HepG2 (cell line): ENCODE measurements at regions of chr1 and their contacts with region 1.

Region 1: GRCh38 chr1:85571830-85572229 is 8.7 kb upstream of the CCN1 start:
- DNase-seq: no peak
- ATAC-seq: no peak
- H3K4me3 ChIP-seq: no peak overlapping the region
- H3K27ac ChIP-seq: no peak overlapping the region
- H3K4me1 ChIP-seq: peaks cover 39% of the 10 kb centered on the region
- H3K27me3 ChIP-seq: no peaks in the 10 kb centered on the region
- CTCF ChIP-seq: no peak
- EP300 ChIP-seq: no peak
- POLR2A ChIP-seq: no peak
- RAD21 ChIP-seq: no peak

Region 2: DNA sequence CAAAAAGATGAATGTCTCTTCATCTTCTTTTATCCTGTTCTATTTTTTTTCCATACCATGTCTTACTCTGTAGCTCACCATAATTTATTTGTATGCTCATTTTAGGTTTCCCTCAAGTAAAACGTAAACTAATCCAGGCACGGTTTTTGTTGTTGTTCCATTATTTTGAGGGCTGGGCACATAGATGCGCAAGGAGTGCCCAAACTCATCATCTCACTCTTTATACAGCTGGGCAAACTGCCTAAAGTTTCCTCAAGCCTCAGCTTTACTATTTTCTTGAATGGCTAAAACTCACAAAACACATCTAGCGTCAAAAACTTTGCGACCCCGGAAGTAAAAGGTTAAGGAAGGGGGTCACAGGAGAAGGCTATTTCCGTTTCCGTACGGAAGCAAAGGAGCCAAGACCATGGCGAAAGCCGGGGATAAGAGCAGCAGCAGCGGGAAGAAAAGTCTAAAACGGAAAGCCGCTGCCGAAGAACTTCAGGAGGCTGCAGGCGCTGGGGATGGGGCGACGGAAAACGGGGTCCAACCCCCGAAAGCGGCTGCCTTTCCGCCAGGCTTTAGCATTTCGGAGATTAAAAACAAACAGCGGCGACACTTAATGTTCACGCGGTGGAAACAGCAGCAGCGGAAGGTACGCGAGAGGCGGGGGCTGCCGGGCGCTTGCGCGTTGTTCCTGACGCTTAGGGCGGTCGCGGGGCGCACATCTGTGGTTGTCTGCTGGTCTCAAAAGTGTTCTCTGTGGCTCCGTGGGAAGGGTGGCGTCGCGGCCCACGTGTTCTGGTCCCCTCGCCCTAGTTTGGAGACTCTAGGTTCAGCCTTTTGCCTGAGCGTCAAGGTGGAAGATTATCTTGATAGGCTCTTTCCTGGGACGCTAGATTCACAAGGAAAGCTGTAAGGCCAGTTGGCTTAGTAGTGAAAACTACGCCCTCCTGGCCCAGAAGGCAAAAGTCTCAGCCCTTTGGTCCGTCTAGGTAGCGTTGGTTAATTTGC is 1092.7 kb before region 1 on chr1 and contains the start of gene RPF1:
- CTCF ChIA-PET with region 1: no interaction called
- POLR2A ChIA-PET with region 1: no interaction called
- in situ Hi-C with region 1: no loop called
- intact Hi-C with region 1: loop called (anchors 5 kb)
- DNase-seq: peak; percentile 82
- ATAC-seq: peak; percentile 99
- H3K4me3 ChIP-seq: peak within 1 kb of the TSS; percentile 82 to 94 (median 93)
- H3K27ac ChIP-seq: peak within 1 kb of the TSS; percentile 86
- H3K4me1 ChIP-seq: peaks cover 20% of the 10 kb centered on the region
- H3K27me3 ChIP-seq: no peaks in the 10 kb centered on the region; a peak in 1 of 5 replicates
- CTCF ChIP-seq: no peak
- EP300 ChIP-seq: peak in 1 of 2 experiments; percentile 8; a peak in 1 of 4 replicates
- POLR2A ChIP-seq: peak; percentile 58 to 84
- RAD21 ChIP-seq: peak; percentile 42; the same call in 1 of the 2 replicates
- total RNA-seq, gene RPF1: 39.0 and 58.4 TPM in 2 replicates

Region 3: DNA sequence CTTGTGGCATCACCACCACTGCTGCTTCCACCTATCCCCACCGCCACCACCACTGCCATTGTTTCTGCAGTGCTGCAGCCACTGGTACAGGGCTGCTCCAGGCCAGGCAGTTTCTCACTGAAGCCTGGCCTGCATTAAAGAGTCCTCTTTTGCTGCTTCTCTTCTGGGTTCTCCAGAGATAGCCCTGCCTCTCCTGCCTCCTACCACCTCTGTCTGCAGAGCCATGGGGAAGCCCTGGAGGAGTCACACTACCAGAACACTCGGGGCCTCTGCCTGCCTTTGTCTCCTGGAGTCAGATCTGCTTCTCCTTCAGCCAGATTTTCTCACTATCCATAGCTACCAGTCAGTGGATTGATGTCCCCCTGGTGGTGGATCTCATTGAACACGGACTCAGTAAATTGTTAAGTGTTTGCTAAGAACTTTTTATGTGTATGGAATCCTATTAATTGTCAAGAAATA is 69.2 kb before region 1 on chr1:
- CTCF ChIA-PET with region 1: no interaction called
- POLR2A ChIA-PET with region 1: no interaction called
- in situ Hi-C with region 1: no loop called
- intact Hi-C with region 1: loop called (anchors 2 kb)
- DNase-seq: peak; percentile 70
- ATAC-seq: peak; percentile 98
- H3K4me3 ChIP-seq: peak overlapping the region; percentile 14 to 62 (median 30); a peak in 5 of 6 replicates
- H3K27ac ChIP-seq: no peak overlapping the region
- H3K4me1 ChIP-seq: peaks cover 18% of the 10 kb centered on the region
- H3K27me3 ChIP-seq: no peaks in the 10 kb centered on the region
- CTCF ChIP-seq: peak; percentile 73
- EP300 ChIP-seq: no peak
- POLR2A ChIP-seq: no peak
- RAD21 ChIP-seq: peak; percentile 36; the same call in 1 of the 2 replicates